Thyroid gland (tissue), 4 donors: ENCODE measurements at regions of chr14 and their contacts with region 1.

Region 1: GRCh38 chr14:47917345-47917954 is 242.0 kb upstream of the MDGA2 start:
- DNase-seq: peak; percentile 46 to 59
- H3K4me3 ChIP-seq: no peak overlapping the region
- H3K27ac ChIP-seq: no peak overlapping the region
- H3K4me1 ChIP-seq: no peaks in the 10 kb centered on the region
- H3K27me3 ChIP-seq: no peaks in the 10 kb centered on the region
- CTCF ChIP-seq: peak; percentile 21 to 79 (median 54)
- POLR2A ChIP-seq: no peak

Region 2: GRCh38 chr14:47846008-47846407 is 71.4 kb before region 1 on chr14:
- intact Hi-C with region 1: no loop called
- DNase-seq: no peak
- H3K4me3 ChIP-seq: no peak overlapping the region
- H3K27ac ChIP-seq: no peak overlapping the region
- H3K4me1 ChIP-seq: no peaks in the 10 kb centered on the region
- H3K27me3 ChIP-seq: no peaks in the 10 kb centered on the region
- CTCF ChIP-seq: no peak
- POLR2A ChIP-seq: no peak

Region 3: GRCh38 chr14:47949006-47949405 is 31.6 kb after region 1 on chr14:
- intact Hi-C with region 1: no loop called
- DNase-seq: no peak
- H3K4me3 ChIP-seq: no peak overlapping the region
- H3K27ac ChIP-seq: no peak overlapping the region
- H3K4me1 ChIP-seq: no peaks in the 10 kb centered on the region
- H3K27me3 ChIP-seq: no peaks in the 10 kb centered on the region
- CTCF ChIP-seq: no peak
- POLR2A ChIP-seq: no peak

Region 4: DNA sequence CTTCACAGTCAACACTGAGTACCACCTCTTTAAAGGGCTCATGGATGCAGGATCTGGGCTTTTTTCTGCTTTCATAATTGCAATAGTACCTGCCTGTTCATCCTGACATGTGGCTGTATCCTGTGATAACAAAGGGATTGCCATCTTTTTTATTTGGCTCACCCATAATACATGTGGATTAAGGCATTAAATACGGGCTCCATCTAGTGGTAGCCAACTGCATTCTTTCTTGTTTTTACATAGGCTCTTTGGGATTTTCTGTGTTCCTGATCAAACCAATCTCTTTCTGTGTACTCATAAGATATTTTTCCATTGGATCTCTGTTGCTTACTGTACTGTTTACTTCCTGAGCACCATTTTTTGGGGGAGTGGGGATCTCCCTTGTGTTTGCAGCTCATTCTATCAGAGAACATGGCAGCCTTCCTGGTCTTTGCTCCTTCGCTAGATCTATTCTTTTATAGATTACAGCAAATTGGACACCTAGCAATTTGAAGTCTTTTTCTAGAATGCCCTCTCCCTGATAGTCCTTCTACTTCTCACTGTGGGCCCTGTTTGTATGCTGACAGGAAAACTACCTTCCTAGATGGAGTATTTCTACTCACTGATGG is 481.3 kb after region 1 on chr14:
- intact Hi-C with region 1: loop called (anchors 5 kb)
- DNase-seq: no peak
- H3K4me3 ChIP-seq: no peak overlapping the region
- H3K27ac ChIP-seq: no peak overlapping the region
- H3K4me1 ChIP-seq: no peaks in the 10 kb centered on the region
- H3K27me3 ChIP-seq: no peaks in the 10 kb centered on the region
- CTCF ChIP-seq: peak; percentile 33 to 79 (median 60)
- POLR2A ChIP-seq: no peak